CD8-positive, alpha-beta memory T cell (primary cell): ENCODE measurements at regions of chr10 and their contacts with region 1.

Region 1: DNA sequence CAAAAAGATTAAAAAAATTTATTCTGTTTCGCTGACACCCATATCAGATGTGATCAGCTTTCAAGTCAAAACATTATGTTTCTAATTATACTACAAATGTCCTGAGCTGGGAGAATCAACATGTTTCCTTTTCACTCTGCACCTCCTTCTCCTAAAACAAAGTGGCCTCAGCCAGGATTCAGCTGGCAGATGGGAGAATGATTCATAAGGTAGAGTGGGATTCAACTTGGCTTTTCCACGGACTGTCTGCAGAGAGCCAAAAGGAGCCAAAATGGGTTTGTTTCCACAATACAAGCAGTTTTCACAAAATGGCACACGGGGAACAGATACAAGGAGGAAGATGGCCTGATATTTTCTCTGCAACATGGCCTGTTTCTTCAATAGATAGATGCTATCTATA is 376.5 kb upstream of the PRKCQ start:
- DNase-seq: no peak
- H3K4me3 ChIP-seq: no peak overlapping the region
- H3K4me3 Mint-ChIP-seq: no peak overlapping the region
- H3K27ac ChIP-seq: no peak overlapping the region
- H3K27ac Mint-ChIP-seq: peak overlapping the region in 1 of 8 donors; percentile 21
- H3K4me1 ChIP-seq: peaks cover 21% of the 10 kb centered on the region
- H3K4me1 Mint-ChIP-seq: peaks cover 34 to 40% (median 37%) of the 10 kb centered on the region in 3 donors
- H3K27me3 ChIP-seq: no peaks in the 10 kb centered on the region
- H3K27me3 Mint-ChIP-seq: peaks cover 0 to 2% of the 10 kb centered on the region in 2 donors

Region 2: DNA sequence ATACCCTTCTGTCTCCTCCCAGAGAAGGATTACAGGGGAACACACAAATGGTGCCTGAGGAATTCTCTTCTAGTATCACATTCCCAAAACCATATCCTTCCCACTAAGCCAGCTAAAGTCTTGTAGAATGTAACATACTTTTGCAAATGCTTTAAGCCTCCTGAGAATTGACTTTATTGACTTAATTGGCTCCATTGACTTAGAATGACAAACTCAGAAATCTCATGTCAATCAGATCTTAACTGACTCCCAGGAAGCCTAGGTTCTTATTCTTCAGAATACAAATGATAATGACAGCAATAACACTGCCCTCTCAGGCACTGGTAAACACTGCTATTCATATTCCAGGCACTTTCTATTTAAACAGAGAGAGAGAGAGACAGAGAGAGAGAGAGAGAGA is 19.6 kb before region 1 on chr10:
- CTCF ChIA-PET with region 1: no interaction called
- POLR2A ChIA-PET with region 1: interaction called, 10 read pairs
- DNase-seq: no peak
- H3K4me3 ChIP-seq: no peak overlapping the region
- H3K4me3 Mint-ChIP-seq: no peak overlapping the region
- H3K27ac ChIP-seq: no peak overlapping the region
- H3K27ac Mint-ChIP-seq: no peak overlapping the region
- H3K4me1 ChIP-seq: no peaks in the 10 kb centered on the region
- H3K4me1 Mint-ChIP-seq: peaks cover 0 to 1% (median 0%) of the 10 kb centered on the region in 3 donors
- H3K27me3 ChIP-seq: no peaks in the 10 kb centered on the region
- H3K27me3 Mint-ChIP-seq: peaks cover 3 to 5% of the 10 kb centered on the region in 2 donors

Region 3: DNA sequence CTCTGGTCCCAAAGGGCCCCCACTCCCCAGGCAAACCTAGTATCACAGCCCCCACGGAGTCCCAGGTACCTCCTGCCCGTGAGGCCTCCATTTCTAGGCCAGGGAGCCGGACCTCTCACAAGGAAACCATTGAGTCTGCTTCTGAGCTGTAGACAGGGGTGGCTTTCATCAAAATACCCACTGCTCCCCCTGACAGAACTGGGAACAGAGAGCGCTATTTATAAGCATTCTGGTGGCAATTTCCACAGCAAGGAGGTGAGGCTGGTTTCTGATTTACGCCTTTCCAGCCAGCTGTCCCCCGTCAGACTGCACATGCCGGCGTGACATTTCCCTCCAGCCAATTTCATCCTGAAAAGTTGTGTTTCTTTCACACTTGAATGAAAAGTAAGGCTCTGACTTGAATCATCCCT is 31.0 kb after region 1 on chr10:
- CTCF ChIA-PET with region 1: no interaction called
- POLR2A ChIA-PET with region 1: no interaction called
- DNase-seq: no peak
- H3K4me3 ChIP-seq: no peak overlapping the region
- H3K4me3 Mint-ChIP-seq: no peak overlapping the region
- H3K27ac ChIP-seq: no peak overlapping the region
- H3K27ac Mint-ChIP-seq: no peak overlapping the region
- H3K4me1 ChIP-seq: peaks cover 7% of the 10 kb centered on the region
- H3K4me1 Mint-ChIP-seq: peaks cover 17 to 20% (median 18%) of the 10 kb centered on the region in 3 donors
- H3K27me3 ChIP-seq: no peaks in the 10 kb centered on the region
- H3K27me3 Mint-ChIP-seq: no peaks in the 10 kb centered on the region